SK-N-SH (cell line): ENCODE measurements at regions of chr1 and their contacts with region 1.

Region 1: DNA sequence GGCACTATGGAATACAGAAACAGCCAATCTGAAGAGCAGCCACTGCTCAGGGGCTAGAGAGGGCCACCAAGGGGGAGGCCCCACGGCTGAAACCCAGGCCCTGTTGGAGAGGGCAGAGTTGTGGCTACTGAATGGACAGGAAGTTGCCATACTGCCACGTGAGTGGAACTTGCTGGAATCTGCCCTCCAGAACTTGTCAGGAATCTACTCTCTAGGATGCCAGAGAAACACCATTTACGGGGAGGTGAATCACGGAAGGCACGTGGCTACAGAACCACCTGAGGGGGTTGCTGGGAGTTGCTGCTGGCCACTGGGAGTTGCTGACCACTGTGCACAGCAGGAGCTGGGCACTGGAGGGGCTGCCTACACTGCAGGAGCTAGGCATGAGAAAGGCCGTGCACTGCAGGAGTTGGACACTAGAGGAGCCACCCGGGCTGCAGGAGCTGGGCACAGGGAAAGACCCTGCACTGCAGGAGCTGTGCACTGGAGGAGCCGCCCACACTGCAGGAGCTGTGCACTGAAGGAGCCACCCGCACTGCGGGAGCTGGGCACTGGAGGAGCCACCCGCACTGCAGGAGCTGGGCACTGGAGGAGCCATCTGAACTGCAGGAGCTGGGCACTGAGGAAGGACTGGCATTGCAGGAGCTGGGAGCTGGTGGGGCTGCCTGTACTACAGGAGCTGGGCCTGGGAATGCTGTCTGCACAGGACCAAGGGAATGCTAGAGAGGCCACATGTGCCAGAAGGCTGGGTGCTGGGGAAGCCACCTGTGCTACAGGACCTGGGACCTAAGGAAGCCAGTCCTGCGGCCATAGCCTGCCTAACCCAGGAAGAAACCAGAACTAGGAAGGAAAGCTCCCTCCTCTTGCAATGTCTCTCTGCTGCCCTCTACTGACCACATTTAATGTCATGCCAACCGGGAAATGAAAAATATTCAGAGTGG is 343.4 kb downstream of the MATN1 start:
- DNase-seq: peak; percentile 85
- H3K4me3 ChIP-seq: peak overlapping the region in 1 of 2 experiments; percentile 28; a peak in 1 of 4 replicates
- H3K27ac ChIP-seq: peak overlapping the region in 1 of 2 experiments; percentile 30; a peak in 1 of 4 replicates
- H3K4me1 ChIP-seq: peaks cover 11 to 36% of the 10 kb centered on the region in 2 experiments; a peak in 3 of 4 replicates
- H3K27me3 ChIP-seq: no peaks in the 10 kb centered on the region
- CTCF ChIP-seq: peak; percentile 78
- EP300 ChIP-seq: no peak
- RAD21 ChIP-seq: peak; percentile 86

Region 2: DNA sequence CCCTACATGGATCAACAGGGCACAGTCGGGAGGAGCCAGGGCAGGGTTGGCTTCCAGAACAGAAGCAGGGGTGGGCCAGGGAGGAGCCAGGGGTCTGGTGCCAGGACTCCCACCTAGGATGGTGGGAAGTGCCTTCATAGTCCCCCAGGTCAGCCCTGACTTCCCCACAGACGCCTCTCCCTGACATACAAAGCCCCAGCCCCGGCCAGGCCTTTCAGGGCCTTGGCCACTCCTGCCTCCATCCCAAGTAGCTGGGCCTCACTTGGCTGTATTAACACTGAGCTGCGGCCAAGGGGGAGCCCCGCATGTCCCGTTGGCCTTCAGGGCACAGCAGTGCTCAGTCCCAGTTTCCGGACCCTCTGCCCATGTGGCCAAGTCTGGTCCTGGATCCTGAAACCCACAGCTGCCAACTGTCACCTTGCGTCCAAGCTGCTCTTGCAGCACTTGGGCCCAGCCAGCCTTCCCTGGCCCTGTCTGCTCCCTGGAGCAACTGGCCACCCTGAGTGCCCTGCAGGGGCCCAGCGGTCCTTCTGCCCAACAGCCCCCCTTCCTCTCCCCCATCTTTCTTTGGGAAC is 284.4 kb before region 1 on chr1:
- CTCF ChIA-PET with region 1: interaction called, 20 read pairs
- POLR2A ChIA-PET with region 1: no interaction called
- DNase-seq: no peak
- H3K4me3 ChIP-seq: no peak overlapping the region
- H3K27ac ChIP-seq: no peak overlapping the region
- H3K4me1 ChIP-seq: peaks cover 0 to 11% of the 10 kb centered on the region in 2 experiments; a peak in 1 of 4 replicates
- H3K27me3 ChIP-seq: no peaks in the 10 kb centered on the region
- CTCF ChIP-seq: no peak
- EP300 ChIP-seq: no peak
- RAD21 ChIP-seq: no peak

Region 3: DNA sequence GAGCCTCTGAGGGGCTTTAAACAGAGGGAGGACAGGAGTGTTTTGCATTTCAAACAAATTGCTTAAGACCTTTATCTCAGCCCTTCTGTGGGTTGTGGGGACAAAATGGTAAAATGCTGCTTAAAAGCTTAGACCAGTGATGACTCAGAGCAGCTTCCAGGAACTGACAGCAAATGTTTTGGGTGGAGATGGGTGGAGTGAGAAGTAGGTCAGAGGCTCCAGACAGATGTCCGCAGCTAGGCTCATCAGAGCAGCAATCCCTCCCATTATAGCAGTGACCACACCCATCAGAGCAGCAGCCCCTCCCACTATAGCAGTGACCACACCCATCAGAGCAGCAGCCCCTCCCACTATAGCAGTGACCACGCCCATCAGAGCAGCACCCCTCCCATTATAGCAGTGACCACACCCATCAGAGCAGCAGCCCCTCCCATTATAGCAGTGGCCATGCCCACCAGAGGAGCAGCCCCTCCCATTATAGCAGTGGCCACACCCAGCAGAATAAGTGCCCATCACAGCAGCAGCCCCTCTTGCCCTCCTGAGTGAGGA is 188.7 kb before region 1 on chr1:
- CTCF ChIA-PET with region 1: interaction called, 16 read pairs
- POLR2A ChIA-PET with region 1: no interaction called
- DNase-seq: peak; percentile 34
- H3K4me3 ChIP-seq: no peak overlapping the region
- H3K27ac ChIP-seq: no peak overlapping the region
- H3K4me1 ChIP-seq: peaks cover 0 to 15% of the 10 kb centered on the region in 2 experiments; a peak in 1 of 4 replicates
- H3K27me3 ChIP-seq: no peaks in the 10 kb centered on the region
- CTCF ChIP-seq: no peak
- EP300 ChIP-seq: no peak
- RAD21 ChIP-seq: no peak

Region 4: GRCh38 chr1:30345578-30346039 is 34.3 kb before region 1 on chr1:
- CTCF ChIA-PET with region 1: interaction called, 13 read pairs
- POLR2A ChIA-PET with region 1: no interaction called
- DNase-seq: no peak
- H3K4me3 ChIP-seq: no peak overlapping the region
- H3K27ac ChIP-seq: no peak overlapping the region
- H3K4me1 ChIP-seq: no peaks in the 10 kb centered on the region
- H3K27me3 ChIP-seq: no peaks in the 10 kb centered on the region
- CTCF ChIP-seq: no peak
- EP300 ChIP-seq: no peak
- RAD21 ChIP-seq: no peak

Region 5: DNA sequence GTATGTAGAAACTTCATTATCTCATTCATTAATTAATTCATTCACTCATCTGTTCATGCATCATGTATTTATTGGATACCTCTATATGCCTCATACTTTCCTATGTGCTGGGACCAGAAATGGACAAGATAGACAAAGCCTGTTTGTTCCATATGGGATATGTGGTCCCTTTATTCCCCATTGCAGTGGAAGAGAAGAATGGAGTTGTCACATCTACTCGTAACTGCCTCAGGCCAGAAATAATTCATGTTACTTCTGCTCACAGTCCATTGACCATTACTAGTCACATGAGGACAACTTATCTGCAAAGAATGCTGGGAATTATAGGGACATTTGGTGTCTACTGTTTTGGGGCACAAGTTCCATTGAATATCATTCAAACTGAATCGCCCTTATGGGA is 15.7 kb after region 1 on chr1:
- CTCF ChIA-PET with region 1: interaction called, 18 read pairs
- POLR2A ChIA-PET with region 1: no interaction called
- DNase-seq: no peak
- H3K4me3 ChIP-seq: no peak overlapping the region
- H3K27ac ChIP-seq: no peak overlapping the region
- H3K4me1 ChIP-seq: no peaks in the 10 kb centered on the region
- H3K27me3 ChIP-seq: no peaks in the 10 kb centered on the region
- CTCF ChIP-seq: no peak
- EP300 ChIP-seq: no peak
- RAD21 ChIP-seq: no peak

Region 6: DNA sequence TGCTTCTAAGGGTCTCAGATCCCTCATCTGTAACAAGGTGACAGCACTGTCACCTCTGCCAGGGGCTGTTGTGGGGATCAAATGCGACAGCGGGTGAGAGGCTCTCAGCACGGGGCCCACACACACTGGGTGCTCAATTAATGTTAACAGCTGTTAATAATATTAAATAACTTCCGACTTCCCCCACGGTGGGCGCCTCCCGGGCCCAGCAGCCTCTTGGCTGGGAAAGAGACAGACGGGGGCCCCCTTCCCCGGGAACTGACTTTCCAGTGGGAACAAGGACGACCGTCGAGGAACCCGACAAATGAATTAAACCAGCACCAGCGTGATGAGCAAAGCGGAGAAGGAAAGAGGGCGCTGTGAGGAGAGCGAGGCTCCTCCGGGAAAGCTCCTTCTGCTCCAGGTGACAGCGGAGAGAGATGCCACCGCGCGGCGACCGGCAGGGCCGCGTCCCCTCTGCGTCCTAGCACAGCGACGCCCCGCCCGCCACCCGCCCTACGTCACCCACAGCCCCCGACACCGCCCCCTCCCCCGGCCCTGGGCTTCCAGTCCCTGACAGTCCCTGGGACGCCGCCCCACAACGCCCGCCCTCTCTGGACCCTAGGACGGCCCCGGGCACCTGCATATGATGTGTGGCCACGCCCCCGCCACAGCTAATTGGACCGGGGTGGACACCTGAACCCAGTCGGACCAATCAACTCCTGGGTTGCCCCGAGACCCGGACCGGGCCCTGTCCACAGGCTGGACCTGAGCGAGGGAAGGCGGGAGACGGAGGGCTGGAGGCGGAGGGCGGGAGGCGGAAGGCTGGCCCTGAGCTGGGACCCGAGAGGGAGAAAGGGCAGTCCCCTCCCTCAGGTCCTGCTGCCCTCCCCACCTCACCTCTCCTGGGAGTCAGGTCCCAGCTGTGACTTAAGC is 305.2 kb after region 1 on chr1:
- CTCF ChIA-PET with region 1: interaction called, 16 read pairs
- POLR2A ChIA-PET with region 1: no interaction called
- DNase-seq: peak; percentile 77
- H3K4me3 ChIP-seq: no peak overlapping the region
- H3K27ac ChIP-seq: no peak overlapping the region
- H3K4me1 ChIP-seq: peaks cover 0 to 14% of the 10 kb centered on the region in 2 experiments; a peak in 2 of 4 replicates
- H3K27me3 ChIP-seq: peaks cover 6% of the 10 kb centered on the region; the same call in 1 of the 2 replicates
- CTCF ChIP-seq: no peak
- EP300 ChIP-seq: no peak
- RAD21 ChIP-seq: no peak